Caco-2 (cell line): ENCODE measurements at regions of chr5 and their contacts with region 1.

Region 1: GRCh38 chr5:180784497-180785097 is 18.0 kb downstream of the MGAT1 start:
- DNase-seq: peak; percentile 78 to 81
- H3K4me3 ChIP-seq: no peak overlapping the region
- H3K4me3 Mint-ChIP-seq: no peak overlapping the region
- H3K27ac Mint-ChIP-seq: no peak overlapping the region
- H3K4me1 ChIP-seq: peaks cover 24% of the 10 kb centered on the region
- H3K4me1 Mint-ChIP-seq: peaks cover 20% of the 10 kb centered on the region
- H3K27me3 ChIP-seq: no peaks in the 10 kb centered on the region
- H3K27me3 Mint-ChIP-seq: no peaks in the 10 kb centered on the region
- CTCF ChIP-seq: peak; percentile 68 to 92

Region 2: GRCh38 chr5:180802325-180803180 is 18.0 kb after region 1 on chr5 and contains the start of gene MGAT1:
- CTCF ChIA-PET with region 1: interaction called, 5 read pairs
- POLR2A ChIA-PET with region 1: interaction called, 8 read pairs
- intact Hi-C with region 1: loop called (anchors 2 kb)
- DNase-seq: peak; percentile 83 to 89
- H3K4me3 ChIP-seq: peak within 1 kb of the TSS; percentile 88
- H3K4me3 Mint-ChIP-seq: peak within 1 kb of the TSS; percentile 82
- H3K27ac Mint-ChIP-seq: peak within 1 kb of the TSS; percentile 89
- H3K4me1 ChIP-seq: peaks cover 43% of the 10 kb centered on the region
- H3K4me1 Mint-ChIP-seq: peaks cover 45% of the 10 kb centered on the region
- H3K27me3 ChIP-seq: no peaks in the 10 kb centered on the region
- H3K27me3 Mint-ChIP-seq: no peaks in the 10 kb centered on the region
- CTCF ChIP-seq: no peak
- total RNA-seq, gene MGAT1: 80.1 and 82.5 TPM in 2 replicates

Region 3: GRCh38 chr5:180860887-180861822 is 76.6 kb after region 1 on chr5 and contains the start of gene ZFP62:
- CTCF ChIA-PET with region 1: interaction called, 3 read pairs
- POLR2A ChIA-PET with region 1: interaction called, 4 read pairs
- intact Hi-C with region 1: loop called (anchors 2 kb)
- DNase-seq: peak; percentile 94 to 97
- H3K4me3 ChIP-seq: peak within 1 kb of the TSS; percentile 87
- H3K4me3 Mint-ChIP-seq: peak within 1 kb of the TSS; percentile 92
- H3K27ac Mint-ChIP-seq: peak within 1 kb of the TSS; percentile 87
- H3K4me1 ChIP-seq: peaks cover 10% of the 10 kb centered on the region; the same call in 1 of the 2 replicates
- H3K4me1 Mint-ChIP-seq: peaks cover 27% of the 10 kb centered on the region
- H3K27me3 ChIP-seq: no peaks in the 10 kb centered on the region
- H3K27me3 Mint-ChIP-seq: no peaks in the 10 kb centered on the region
- CTCF ChIP-seq: peak in 1 of 2 experiments; percentile 0
- total RNA-seq, gene ZFP62: 34.4 and 35.9 TPM in 2 replicates

Region 4: GRCh38 chr5:181043285-181044092 is 258.9 kb after region 1 on chr5:
- CTCF ChIA-PET with region 1: no interaction called
- POLR2A ChIA-PET with region 1: no interaction called
- intact Hi-C with region 1: loop called (anchors 5 kb)
- DNase-seq: peak in 1 of 2 experiments; percentile 44
- H3K4me3 ChIP-seq: no peak overlapping the region
- H3K4me3 Mint-ChIP-seq: no peak overlapping the region
- H3K27ac Mint-ChIP-seq: no peak overlapping the region
- H3K4me1 ChIP-seq: no peaks in the 10 kb centered on the region
- H3K4me1 Mint-ChIP-seq: no peaks in the 10 kb centered on the region
- H3K27me3 ChIP-seq: no peaks in the 10 kb centered on the region
- H3K27me3 Mint-ChIP-seq: peaks cover 5% of the 10 kb centered on the region
- CTCF ChIP-seq: peak; percentile 24 to 34

Region 5: GRCh38 chr5:181173420-181174342 is 389.1 kb after region 1 on chr5:
- CTCF ChIA-PET with region 1: interaction called, 4 read pairs
- POLR2A ChIA-PET with region 1: no interaction called
- intact Hi-C with region 1: loop called (anchors 1 kb)
- DNase-seq: peak; percentile 72 to 75
- H3K4me3 ChIP-seq: peak overlapping the region; percentile 42
- H3K4me3 Mint-ChIP-seq: peak overlapping the region; percentile 96
- H3K27ac Mint-ChIP-seq: peak overlapping the region; percentile 78
- H3K4me1 ChIP-seq: peaks cover 7% of the 10 kb centered on the region
- H3K4me1 Mint-ChIP-seq: peaks cover 15% of the 10 kb centered on the region
- H3K27me3 ChIP-seq: no peaks in the 10 kb centered on the region
- H3K27me3 Mint-ChIP-seq: peaks cover 3% of the 10 kb centered on the region
- CTCF ChIP-seq: peak in 1 of 2 experiments; percentile 2